ENCODE measurements at regions of chr19 and their contacts with region 1.

Region 1: DNA sequence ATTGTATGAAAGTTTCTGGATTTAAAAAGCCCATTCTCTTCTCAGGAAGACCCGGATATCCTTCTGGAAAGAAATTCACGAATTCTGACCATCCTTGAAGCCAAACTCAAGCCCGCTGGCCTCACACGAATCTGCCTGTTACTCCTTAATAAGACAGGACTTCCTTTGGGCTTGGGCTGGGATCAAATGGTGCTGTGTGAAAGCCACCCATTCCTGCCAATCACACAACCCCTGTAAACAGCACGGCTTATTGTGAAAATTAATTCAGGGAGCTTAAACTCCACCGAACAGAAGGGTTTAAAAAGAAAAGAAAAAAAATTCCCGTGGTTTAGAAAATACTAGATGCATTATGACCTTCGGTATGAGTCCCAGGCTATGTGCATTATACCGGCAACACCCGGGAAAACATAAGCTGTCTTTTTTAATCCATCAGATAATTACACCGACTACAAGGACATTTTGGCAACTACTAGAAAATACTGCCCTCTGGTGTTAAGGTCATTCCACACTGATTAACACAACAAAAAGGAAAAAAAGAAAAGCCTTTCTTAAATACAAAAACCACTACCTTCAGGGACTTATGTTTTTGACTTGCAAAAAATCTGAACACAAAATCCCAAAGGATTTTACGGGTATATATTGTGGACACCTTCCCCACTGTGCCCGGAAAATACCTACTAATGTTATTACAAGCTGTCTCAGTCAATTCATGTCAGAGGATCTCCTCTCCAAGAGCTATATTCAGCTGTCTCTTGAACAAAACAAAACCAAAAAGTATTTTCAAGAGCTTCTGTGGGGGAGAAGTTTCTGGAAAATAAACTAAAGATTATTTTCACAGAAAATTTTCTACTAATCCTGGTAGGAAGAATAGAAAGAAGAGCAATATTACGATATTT is 76.0 kb upstream of the LSM14A start:
- DNase-seq: peak; percentile 69
- H3K4me3 Mint-ChIP-seq: no peak overlapping the region
- H3K27ac Mint-ChIP-seq: no peak overlapping the region
- H3K4me1 Mint-ChIP-seq: no peaks in the 10 kb centered on the region
- H3K27me3 Mint-ChIP-seq: peaks cover 28% of the 10 kb centered on the region
- CTCF ChIP-seq: peak; percentile 65

Region 2: GRCh38 chr19:33785795-33786194 is 310.5 kb before region 1 on chr19:
- CTCF ChIA-PET with region 1: interaction called, 19 read pairs
- POLR2A ChIA-PET with region 1: no interaction called
- intact Hi-C with region 1: no loop called
- DNase-seq: peak; percentile 38
- H3K4me3 Mint-ChIP-seq: no peak overlapping the region
- H3K27ac Mint-ChIP-seq: no peak overlapping the region
- H3K4me1 Mint-ChIP-seq: no peaks in the 10 kb centered on the region
- H3K27me3 Mint-ChIP-seq: peaks cover 11% of the 10 kb centered on the region
- CTCF ChIP-seq: no peak

Region 3: GRCh38 chr19:34041925-34042521 is 54.2 kb before region 1 on chr19:
- CTCF ChIA-PET with region 1: interaction called, 10 read pairs
- POLR2A ChIA-PET with region 1: no interaction called
- intact Hi-C with region 1: loop called (anchors 1 kb)
- DNase-seq: peak; percentile 68
- H3K4me3 Mint-ChIP-seq: no peak overlapping the region
- H3K27ac Mint-ChIP-seq: no peak overlapping the region
- H3K4me1 Mint-ChIP-seq: no peaks in the 10 kb centered on the region
- H3K27me3 Mint-ChIP-seq: peaks cover 3% of the 10 kb centered on the region
- CTCF ChIP-seq: peak; percentile 64

Region 4: GRCh38 chr19:34082289-34083077 is 13.8 kb before region 1 on chr19:
- CTCF ChIA-PET with region 1: interaction called, 23 read pairs
- POLR2A ChIA-PET with region 1: no interaction called
- intact Hi-C with region 1: no loop called
- DNase-seq: no peak
- H3K4me3 Mint-ChIP-seq: no peak overlapping the region
- H3K27ac Mint-ChIP-seq: no peak overlapping the region
- H3K4me1 Mint-ChIP-seq: no peaks in the 10 kb centered on the region
- H3K27me3 Mint-ChIP-seq: no peaks in the 10 kb centered on the region
- CTCF ChIP-seq: no peak

Region 5: DNA sequence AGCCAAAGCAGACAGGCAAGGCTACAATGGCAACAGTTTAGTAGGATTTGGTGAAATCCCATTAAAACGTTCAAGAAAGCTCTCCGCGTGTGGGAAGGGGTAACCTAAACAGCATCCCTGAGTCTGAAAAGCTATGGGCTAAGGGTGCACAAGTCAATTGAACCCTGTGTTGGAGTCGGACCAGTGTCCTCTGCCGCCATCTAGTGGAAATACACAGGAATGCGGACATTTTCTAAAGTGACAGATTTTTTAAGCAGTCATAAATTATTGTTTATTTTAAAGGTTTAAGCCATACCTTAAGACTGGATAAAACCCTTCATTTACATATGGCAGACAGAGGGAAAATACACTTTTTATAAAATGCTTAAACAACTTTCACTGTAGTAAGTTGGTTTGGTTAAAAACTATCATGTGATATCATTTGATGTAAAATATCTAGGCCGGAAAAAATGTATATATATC is 49.5 kb after region 1 on chr19:
- CTCF ChIA-PET with region 1: interaction called, 23 read pairs
- POLR2A ChIA-PET with region 1: no interaction called
- intact Hi-C with region 1: loop called (anchors 2 kb)
- DNase-seq: peak; percentile 77
- H3K4me3 Mint-ChIP-seq: no peak overlapping the region
- H3K27ac Mint-ChIP-seq: no peak overlapping the region
- H3K4me1 Mint-ChIP-seq: no peaks in the 10 kb centered on the region
- H3K27me3 Mint-ChIP-seq: no peaks in the 10 kb centered on the region
- CTCF ChIP-seq: peak; percentile 64

Region 6: DNA sequence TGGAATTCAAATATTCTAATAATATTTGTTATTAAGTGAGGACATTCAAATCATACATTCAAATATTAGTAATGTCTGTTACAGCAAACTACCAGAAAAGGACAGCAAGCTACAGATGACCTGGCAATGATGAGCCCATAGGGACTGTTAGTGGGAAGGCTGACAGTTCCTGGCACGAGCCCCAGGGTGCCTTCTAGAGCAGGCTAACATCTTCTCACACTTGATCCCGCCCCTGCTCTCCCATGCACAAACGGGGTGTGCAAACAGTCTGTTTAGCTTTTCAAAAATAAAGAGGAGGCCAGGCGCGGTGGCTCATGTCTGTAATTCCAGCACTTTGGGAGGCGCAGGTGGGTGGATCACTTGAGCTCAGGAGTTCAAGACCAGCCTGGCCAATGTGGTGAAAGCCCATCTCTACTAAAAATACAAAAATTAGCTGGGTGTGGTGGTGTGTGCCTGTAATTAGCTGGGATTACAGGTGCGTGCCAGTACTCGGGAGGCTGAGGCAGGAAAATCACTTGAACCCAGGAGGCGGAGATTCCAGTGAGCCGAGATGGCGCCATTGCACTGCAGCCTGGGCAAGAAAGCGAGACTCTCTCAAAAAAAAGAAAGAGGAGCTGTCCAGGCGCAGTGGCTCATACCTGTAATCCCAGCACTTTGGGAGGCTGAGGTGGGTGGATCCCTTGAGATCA is 148.5 kb after region 1 on chr19:
- CTCF ChIA-PET with region 1: no interaction called
- POLR2A ChIA-PET with region 1: no interaction called
- intact Hi-C with region 1: no loop called
- DNase-seq: no peak
- H3K4me3 Mint-ChIP-seq: no peak overlapping the region
- H3K27ac Mint-ChIP-seq: no peak overlapping the region
- H3K4me1 Mint-ChIP-seq: no peaks in the 10 kb centered on the region
- H3K27me3 Mint-ChIP-seq: no peaks in the 10 kb centered on the region
- CTCF ChIP-seq: no peak

Measured in MCF 10A (cell line).